RWPE1 (cell line): ENCODE measurements at regions of chr4 and their contacts with region 1.

Region 1: DNA sequence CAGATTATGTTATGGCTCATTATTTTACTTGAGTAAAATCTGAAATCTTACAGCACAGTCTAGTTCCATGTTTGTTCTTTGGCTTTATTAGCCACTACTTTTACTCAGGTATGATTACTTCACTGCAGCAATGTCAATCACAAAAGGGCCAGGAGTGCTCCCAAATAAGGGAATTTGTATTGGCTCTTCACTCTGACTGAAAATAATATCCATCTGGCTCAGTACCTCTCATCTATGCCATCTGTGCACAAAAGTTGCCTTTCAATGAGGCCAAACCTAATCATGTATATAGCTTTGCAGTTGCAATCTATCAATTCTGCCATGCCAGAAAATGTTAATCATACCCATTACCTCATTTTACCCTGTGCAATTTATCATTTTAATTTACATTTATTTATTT is 161.1 kb downstream of the TECRL start:
- DNase-seq: no peak
- H3K27ac ChIP-seq: no peak overlapping the region
- CTCF ChIP-seq: no peak

Region 2: GRCh38 chr4:63921561-63921960 is 326.6 kb before region 1 on chr4:
- CTCF ChIA-PET with region 1: no interaction called
- POLR2A ChIA-PET with region 1: no interaction called
- DNase-seq: no peak
- H3K27ac ChIP-seq: no peak overlapping the region
- CTCF ChIP-seq: no peak

Region 3: GRCh38 chr4:64144994-64145393 is 103.2 kb before region 1 on chr4:
- CTCF ChIA-PET with region 1: no interaction called
- POLR2A ChIA-PET with region 1: no interaction called
- DNase-seq: peak; percentile 40
- H3K27ac ChIP-seq: no peak overlapping the region
- CTCF ChIP-seq: no peak

Region 4: DNA sequence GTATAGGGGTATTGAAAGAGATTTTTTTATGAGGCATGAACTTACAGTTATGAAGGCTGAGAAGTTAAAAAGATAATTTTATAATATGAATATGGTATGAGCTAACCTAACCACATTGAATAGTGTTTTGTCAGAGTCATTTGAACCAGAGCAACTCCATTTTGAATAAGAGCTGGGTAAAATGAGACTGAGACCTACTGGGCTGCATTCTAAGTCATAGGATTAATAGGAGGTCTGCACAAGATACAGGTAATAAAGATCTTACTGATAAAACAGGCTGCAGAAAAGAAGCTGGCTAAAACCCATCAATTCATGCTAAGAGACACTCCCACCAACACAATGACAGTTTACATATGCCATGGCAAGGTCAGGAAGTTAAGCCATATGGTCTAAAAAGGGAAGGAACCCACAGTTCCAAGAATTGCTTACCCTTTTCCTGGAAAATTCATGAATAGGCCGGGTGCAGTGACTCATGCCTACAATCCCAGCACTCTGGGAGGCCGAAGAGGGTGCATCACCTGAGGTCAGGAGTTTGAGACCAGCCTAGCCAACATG is 48.1 kb before region 1 on chr4:
- CTCF ChIA-PET with region 1: interaction called, 11 read pairs
- POLR2A ChIA-PET with region 1: no interaction called
- DNase-seq: no peak
- H3K27ac ChIP-seq: no peak overlapping the region
- CTCF ChIP-seq: no peak

Region 5: GRCh38 chr4:64271601-64272081 is 23.5 kb after region 1 on chr4:
- CTCF ChIA-PET with region 1: no interaction called
- POLR2A ChIA-PET with region 1: no interaction called
- DNase-seq: no peak
- H3K27ac ChIP-seq: no peak overlapping the region
- CTCF ChIP-seq: no peak

Region 6: GRCh38 chr4:64353904-64354303 is 105.7 kb after region 1 on chr4:
- CTCF ChIA-PET with region 1: no interaction called
- POLR2A ChIA-PET with region 1: no interaction called
- DNase-seq: no peak
- H3K27ac ChIP-seq: no peak overlapping the region
- CTCF ChIP-seq: no peak